ENCODE measurements at regions of chr10 and their contacts with region 1.

Region 1: DNA sequence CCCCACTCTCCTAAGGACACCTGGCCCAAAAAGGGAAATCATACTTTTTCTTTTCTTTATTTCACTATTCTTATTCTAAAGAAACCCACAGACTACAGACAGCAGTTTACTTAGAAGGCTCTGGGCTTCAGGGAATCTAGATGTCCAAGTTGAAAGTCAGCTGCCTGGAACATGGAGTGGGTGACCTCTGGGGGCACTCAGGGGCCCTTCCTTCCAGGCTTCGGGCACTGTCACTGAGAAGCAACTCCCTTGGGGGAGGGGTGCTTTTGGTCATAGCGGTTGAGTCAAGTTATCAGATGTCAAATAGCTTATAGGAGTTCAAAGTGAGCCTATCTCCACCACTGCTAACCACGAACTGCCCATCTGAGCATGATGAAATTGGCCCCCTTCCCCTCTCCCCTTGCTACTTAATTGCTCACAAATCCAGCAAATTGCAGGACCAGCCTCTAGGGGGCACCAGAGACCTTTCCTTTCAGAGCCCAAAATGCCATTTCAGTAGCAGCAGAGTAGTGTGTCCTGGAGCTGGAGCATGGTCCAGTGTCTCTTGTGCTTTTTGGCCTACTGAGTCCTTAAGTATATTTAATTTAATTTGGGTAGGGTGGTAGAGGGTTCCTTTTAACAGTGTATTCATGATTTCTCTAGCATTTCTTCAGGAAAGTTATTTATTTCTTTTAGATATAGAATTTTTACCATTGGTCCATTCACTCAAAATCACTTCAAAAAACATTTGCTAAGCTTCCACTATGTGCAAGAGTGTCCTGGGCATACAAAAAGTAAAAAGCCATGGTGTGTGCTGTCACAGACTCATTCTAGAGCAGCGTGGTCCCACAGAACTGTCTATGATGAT is 463.8 kb downstream of the KCNMA1 start:
- DNase-seq: peak; percentile 70
- ATAC-seq: peak; percentile 50

Region 2: DNA sequence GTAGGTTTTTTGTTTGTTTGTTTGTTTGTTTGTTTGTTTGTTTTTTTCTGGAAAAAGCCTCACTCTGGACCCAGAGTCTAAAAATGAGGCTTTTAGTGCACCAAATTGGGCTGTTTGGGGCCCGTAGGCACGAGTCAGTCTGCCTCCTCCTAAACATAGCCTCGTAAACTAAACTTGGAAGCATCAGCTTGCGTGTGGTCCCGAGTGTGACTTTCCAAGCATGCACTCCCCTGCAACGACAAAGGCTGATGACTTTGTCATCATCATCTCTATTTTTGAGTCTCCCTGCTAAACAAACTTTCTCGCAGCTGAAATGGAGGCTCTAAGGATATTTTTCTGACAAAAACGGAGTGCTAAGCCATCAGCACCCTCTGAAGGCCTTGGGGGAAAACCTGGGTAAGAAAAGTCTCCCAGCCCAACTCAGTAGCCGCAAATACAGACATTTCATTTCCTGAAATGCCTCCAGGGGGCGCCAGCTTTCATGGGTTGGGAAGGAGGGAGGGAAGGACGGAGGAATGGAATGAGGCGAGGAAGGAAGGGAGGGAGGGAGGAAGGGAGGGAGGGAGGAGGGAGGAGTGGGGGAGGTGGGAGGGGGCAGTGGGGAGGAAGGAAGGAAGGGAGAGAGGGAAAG is 217.9 kb after region 1 on chr10:
- intact Hi-C with region 1: loop called (anchors 10 kb)
- DNase-seq: no peak
- ATAC-seq: peak; percentile 74

Region 3: GRCh38 chr10:77494327-77494726 is 320.5 kb after region 1 on chr10:
- intact Hi-C with region 1: loop called (anchors 10 kb)
- DNase-seq: no peak
- ATAC-seq: no peak

Region 4: DNA sequence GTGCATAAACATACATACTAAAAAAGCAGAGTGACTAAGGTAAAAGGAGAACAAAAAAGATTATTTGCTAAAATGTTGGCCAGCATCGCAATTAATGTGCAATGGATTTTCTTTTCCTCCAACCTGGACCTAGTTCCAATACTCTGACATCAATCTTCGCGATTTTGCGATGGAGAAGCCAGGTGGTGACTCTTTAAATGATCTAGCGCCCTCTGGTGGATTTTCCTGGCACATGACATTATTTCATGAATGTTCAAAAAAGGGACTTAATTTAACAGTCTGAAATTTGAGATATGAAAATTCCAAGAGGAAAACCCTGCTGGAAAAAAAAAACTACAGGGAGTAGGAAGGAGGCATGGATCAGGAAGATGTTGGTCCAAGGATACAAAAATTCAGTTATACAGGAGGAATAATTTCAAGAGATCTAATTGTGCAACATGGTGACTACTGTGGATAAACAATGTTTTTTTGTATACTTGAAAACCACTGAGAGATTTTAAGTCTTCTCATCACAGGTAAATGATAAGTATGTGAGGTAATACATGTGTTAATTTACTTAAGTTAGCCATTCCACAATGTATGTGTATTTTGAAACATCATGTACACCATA is 468.1 kb after region 1 on chr10:
- intact Hi-C with region 1: loop called (anchors 1 kb)
- DNase-seq: no peak
- ATAC-seq: no peak

Region 5: GRCh38 chr10:77710759-77711682 is 537.2 kb after region 1 on chr10:
- intact Hi-C with region 1: loop called (anchors 5 kb)
- DNase-seq: peak; percentile 89
- ATAC-seq: peak; percentile 92

Measured in Right ventricle myocardium inferior (tissue), 1 donor.